Activated naive CD4-positive, alpha-beta T cell treated with anti-CD3 and anti-CD28 coated beads, Interleukin-2, amount 10 ng/mL, durations not matched to agents 7 days and 5 days (primary cell): ENCODE measurements at regions of chr10 and their contacts with region 1.

Region 1: DNA sequence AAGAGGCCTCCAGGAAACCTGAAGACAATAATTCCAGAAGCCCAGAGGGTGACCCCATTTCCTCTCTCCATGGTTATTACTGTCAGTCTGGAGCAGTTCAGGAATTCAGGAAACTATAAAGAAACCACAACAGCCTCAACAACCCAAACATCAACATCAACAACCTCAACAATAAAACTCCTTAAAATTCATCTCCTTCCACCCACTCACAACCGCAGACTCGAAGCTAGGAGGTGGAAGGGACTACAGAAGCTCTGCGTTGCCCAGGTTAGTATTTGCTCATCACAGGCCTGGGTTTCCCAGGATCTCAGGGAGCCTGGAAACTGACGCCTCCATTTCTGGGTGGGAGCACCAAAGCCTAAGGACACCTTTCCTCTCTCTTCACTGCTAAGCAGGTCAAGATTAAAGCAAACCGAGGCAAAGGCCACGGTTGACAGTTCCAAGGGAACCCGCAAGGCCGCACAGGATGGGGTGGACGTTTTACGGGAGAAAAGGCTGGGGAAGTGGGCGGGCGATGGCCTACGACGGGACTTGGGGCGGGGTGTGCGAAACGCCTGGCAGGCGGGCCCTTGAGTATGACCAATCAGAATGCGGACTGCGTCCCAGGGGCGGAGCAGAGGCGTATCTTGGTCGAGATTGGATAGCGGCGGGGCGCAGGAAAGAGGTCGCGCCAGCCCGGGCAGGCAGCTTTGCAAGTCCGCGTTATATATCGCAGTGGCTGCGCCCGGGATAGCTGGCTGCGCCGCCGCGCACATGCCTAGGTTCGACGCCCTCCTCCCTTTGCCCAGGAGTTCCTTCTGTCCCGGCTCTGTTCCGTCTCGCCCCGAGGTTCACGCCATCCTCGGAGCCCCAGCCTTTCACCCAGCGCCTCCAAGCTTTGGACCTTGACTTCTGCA is at the start of gene ELOVL3:
- DNase-seq: peak; percentile 93
- H3K4me3 Mint-ChIP-seq: peak within 1 kb of the TSS; percentile 38
- H3K27ac Mint-ChIP-seq: no peak within 1 kb of the TSS
- H3K4me1 Mint-ChIP-seq: peaks cover 25% of the 10 kb centered on the region
- H3K27me3 Mint-ChIP-seq: peaks cover 72% of the 10 kb centered on the region

Region 2: GRCh38 chr10:102085336-102085735 is 140.6 kb before region 1 on chr10:
- CTCF ChIA-PET with region 1: no interaction called
- DNase-seq: no peak
- H3K4me3 Mint-ChIP-seq: no peak overlapping the region
- H3K27ac Mint-ChIP-seq: no peak overlapping the region
- H3K4me1 Mint-ChIP-seq: no peaks in the 10 kb centered on the region
- H3K27me3 Mint-ChIP-seq: no peaks in the 10 kb centered on the region

Region 3: GRCh38 chr10:102185811-102186527 is 39.9 kb before region 1 on chr10:
- CTCF ChIA-PET with region 1: interaction called, 26 read pairs
- DNase-seq: no peak
- H3K4me3 Mint-ChIP-seq: no peak overlapping the region
- H3K27ac Mint-ChIP-seq: no peak overlapping the region
- H3K4me1 Mint-ChIP-seq: peaks cover 22% of the 10 kb centered on the region
- H3K27me3 Mint-ChIP-seq: no peaks in the 10 kb centered on the region

Region 4: DNA sequence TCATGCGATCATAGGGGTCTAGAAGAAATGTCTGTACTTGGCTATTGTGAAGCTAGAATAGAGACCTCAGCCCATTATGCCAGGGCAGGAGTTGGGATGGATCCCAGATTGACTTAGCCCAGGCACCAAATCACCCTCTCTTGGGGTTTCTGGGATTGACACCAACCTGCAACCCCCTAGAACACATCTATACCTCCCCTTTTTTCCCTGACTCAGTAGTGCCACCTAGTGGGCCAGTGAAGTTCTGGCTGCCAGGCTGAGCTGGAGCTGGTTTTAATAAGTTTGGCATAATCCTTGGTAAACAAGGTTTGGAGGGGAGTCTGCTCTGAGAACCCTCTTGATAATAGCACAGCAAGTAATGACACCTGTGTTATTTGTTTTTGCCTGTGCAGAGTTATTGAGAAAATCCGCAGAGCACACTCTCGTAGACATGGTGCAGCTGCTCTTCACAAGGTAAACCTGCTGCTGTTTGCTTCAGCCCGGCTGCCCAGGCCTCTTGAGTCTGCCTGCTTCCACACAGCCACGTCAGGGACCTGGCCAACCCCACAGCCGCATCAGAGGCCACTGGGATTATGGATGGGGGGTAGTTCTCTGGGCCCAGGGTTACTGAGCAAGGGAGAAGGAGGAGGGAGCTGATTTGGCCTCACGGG is 126.3 kb after region 1 on chr10:
- CTCF ChIA-PET with region 1: interaction called, 693 read pairs
- DNase-seq: peak; percentile 84
- H3K4me3 Mint-ChIP-seq: no peak overlapping the region
- H3K27ac Mint-ChIP-seq: no peak overlapping the region
- H3K4me1 Mint-ChIP-seq: no peaks in the 10 kb centered on the region
- H3K27me3 Mint-ChIP-seq: no peaks in the 10 kb centered on the region

Region 5: GRCh38 chr10:102394079-102394800 is 168.3 kb after region 1 on chr10:
- CTCF ChIA-PET with region 1: interaction called, 174 read pairs
- DNase-seq: peak; percentile 99
- H3K4me3 Mint-ChIP-seq: peak overlapping the region; percentile 79
- H3K27ac Mint-ChIP-seq: peak overlapping the region; percentile 96
- H3K4me1 Mint-ChIP-seq: peaks cover 42% of the 10 kb centered on the region
- H3K27me3 Mint-ChIP-seq: peaks cover 10% of the 10 kb centered on the region

Region 6: GRCh38 chr10:102476466-102477141 is 250.7 kb after region 1 on chr10:
- CTCF ChIA-PET with region 1: interaction called, 42 read pairs
- DNase-seq: peak; percentile 43
- H3K4me3 Mint-ChIP-seq: no peak overlapping the region
- H3K27ac Mint-ChIP-seq: peak overlapping the region; percentile 14
- H3K4me1 Mint-ChIP-seq: peaks cover 29% of the 10 kb centered on the region
- H3K27me3 Mint-ChIP-seq: no peaks in the 10 kb centered on the region